ENCODE measurements at regions of chr16 and their contacts with region 1.

Region 1: GRCh38 chr16:84726079-84726668 is 26.4 kb downstream of the USP10 start:
- DNase-seq: peak; percentile 90
- H3K4me3 Mint-ChIP-seq: no peak overlapping the region
- H3K27ac Mint-ChIP-seq: no peak overlapping the region
- H3K4me1 Mint-ChIP-seq: peaks cover 65% of the 10 kb centered on the region
- H3K27me3 Mint-ChIP-seq: no peaks in the 10 kb centered on the region

Region 2: GRCh38 chr16:84504420-84505248 is 221.5 kb before region 1 on chr16 and contains the start of gene MEAK7:
- CTCF ChIA-PET with region 1: interaction called, 11 read pairs
- DNase-seq: peak; percentile 98
- H3K4me3 Mint-ChIP-seq: peak within 1 kb of the TSS; percentile 81
- H3K27ac Mint-ChIP-seq: peak within 1 kb of the TSS; percentile 79
- H3K4me1 Mint-ChIP-seq: peaks cover 66% of the 10 kb centered on the region
- H3K27me3 Mint-ChIP-seq: peaks cover 5% of the 10 kb centered on the region

Region 3: GRCh38 chr16:84511180-84511824 is 214.9 kb before region 1 on chr16:
- CTCF ChIA-PET with region 1: interaction called, 14 read pairs
- DNase-seq: peak; percentile 80
- H3K4me3 Mint-ChIP-seq: no peak overlapping the region
- H3K27ac Mint-ChIP-seq: peak overlapping the region; percentile 87
- H3K4me1 Mint-ChIP-seq: peaks cover 92% of the 10 kb centered on the region
- H3K27me3 Mint-ChIP-seq: peaks cover 7% of the 10 kb centered on the region

Region 4: GRCh38 chr16:84617791-84618580 is 108.2 kb before region 1 on chr16 and contains the start of gene COTL1:
- CTCF ChIA-PET with region 1: interaction called, 41 read pairs
- DNase-seq: peak; percentile 96
- H3K4me3 Mint-ChIP-seq: peak within 1 kb of the TSS; percentile 96
- H3K27ac Mint-ChIP-seq: peak within 1 kb of the TSS; percentile 88
- H3K4me1 Mint-ChIP-seq: peaks cover 63% of the 10 kb centered on the region
- H3K27me3 Mint-ChIP-seq: peaks cover 31% of the 10 kb centered on the region

Region 5: DNA sequence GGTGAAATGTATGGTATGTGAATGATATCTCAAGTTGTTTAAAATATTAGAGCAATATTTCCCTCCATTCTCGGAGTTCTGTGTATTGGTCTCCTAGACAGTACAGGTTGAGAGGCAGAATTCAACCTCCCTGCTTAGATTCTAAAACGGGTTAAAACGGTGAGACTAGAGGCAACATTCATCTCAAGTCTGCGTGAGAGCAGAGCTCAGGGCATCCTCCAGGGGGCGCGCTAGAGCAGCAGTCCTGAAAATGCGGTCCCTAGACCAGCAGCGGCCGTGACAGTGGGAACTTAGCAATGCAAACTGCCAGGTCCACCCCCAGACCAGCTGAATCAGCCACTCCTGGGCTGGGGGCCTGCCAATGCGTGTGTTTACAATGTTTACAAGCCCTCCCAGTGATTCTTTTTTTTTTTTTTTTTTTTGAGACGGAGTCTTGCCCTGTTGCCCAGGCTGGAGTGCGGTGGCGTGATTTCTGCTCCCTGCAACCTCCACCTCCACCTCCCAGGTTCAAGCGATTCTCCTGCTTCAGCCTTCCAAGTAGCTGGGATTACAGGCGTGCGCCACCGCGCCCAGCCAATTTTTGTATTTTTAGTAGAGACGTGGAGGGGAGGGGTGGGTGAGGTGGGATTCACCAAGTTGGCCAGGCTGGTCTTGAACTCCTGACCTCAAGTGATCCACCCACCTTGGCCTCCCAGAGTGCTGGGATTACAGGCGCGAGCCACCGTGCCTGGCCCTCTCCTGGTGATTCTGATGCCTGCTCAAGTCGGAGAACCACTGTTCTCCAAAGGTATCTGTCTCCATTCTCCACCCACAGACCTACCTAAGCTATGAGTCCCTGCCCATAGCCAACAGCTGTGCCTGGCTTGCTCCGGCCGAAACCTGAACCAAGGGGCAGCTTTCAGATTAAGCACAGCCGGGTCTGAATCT is 53.6 kb before region 1 on chr16:
- CTCF ChIA-PET with region 1: interaction called, 70 read pairs
- DNase-seq: peak; percentile 88
- H3K4me3 Mint-ChIP-seq: no peak overlapping the region
- H3K27ac Mint-ChIP-seq: no peak overlapping the region
- H3K4me1 Mint-ChIP-seq: peaks cover 7% of the 10 kb centered on the region
- H3K27me3 Mint-ChIP-seq: peaks cover 30% of the 10 kb centered on the region

Region 6: GRCh38 chr16:84714028-84714427 is 12.1 kb before region 1 on chr16:
- CTCF ChIA-PET with region 1: interaction called, 26 read pairs
- DNase-seq: no peak
- H3K4me3 Mint-ChIP-seq: no peak overlapping the region
- H3K27ac Mint-ChIP-seq: no peak overlapping the region
- H3K4me1 Mint-ChIP-seq: peaks cover 29% of the 10 kb centered on the region
- H3K27me3 Mint-ChIP-seq: no peaks in the 10 kb centered on the region

Region 7: GRCh38 chr16:84774810-84775209 is 48.6 kb after region 1 on chr16:
- CTCF ChIA-PET with region 1: no interaction called
- DNase-seq: no peak
- H3K4me3 Mint-ChIP-seq: no peak overlapping the region
- H3K27ac Mint-ChIP-seq: no peak overlapping the region
- H3K4me1 Mint-ChIP-seq: peaks cover 3% of the 10 kb centered on the region
- H3K27me3 Mint-ChIP-seq: no peaks in the 10 kb centered on the region

Region 8: DNA sequence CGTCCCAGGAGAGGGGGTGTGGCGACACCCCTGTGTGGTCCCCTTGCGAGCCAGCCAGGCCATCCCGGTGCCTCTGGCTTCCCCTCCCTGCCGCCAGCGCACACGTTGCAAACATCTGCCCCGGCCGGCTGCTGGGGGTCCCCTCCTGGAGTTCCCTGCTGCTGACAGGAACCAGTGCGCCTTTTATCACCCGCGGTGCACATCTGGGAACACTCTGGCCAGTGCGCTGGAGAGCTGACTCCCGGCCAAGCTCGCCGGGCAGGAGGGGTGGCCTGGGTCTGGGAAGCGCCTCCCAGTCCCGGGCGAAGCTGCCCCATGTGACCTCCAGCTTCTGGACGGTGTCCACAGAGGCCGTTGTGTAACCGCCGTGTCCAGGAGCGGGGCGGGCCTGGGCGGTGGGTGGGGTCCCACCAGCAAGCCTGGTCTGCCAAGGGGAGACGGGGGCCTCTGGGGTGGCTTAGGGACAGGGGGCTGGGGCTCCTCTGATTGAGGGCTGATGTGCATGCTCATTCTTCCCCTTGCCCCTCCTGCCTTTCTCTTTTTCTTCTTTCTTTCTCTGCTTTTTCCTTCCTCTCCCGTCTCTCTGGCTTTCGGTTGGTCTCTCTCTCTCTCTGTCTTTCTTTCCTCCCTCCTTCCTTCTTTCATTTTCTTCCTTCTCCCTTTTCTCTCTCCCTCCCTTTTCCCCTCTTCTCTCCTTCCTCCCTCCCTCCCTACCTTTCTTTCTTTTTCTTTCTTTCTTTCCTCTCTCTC is 411.3 kb after region 1 on chr16:
- CTCF ChIA-PET with region 1: no interaction called
- DNase-seq: no peak
- H3K4me3 Mint-ChIP-seq: no peak overlapping the region
- H3K27ac Mint-ChIP-seq: no peak overlapping the region
- H3K4me1 Mint-ChIP-seq: peaks cover 24% of the 10 kb centered on the region
- H3K27me3 Mint-ChIP-seq: peaks cover 66% of the 10 kb centered on the region

Measured in activated naive CD4-positive, alpha-beta T cell treated with anti-CD3 and anti-CD28 coated beads, Interleukin-2, amount 10 ng/mL, durations not matched to agents 7 days and 5 days (primary cell).